Sigmoid colon (tissue), 7 donors: ENCODE measurements at regions of chr1 and their contacts with region 1.

Region 1: DNA sequence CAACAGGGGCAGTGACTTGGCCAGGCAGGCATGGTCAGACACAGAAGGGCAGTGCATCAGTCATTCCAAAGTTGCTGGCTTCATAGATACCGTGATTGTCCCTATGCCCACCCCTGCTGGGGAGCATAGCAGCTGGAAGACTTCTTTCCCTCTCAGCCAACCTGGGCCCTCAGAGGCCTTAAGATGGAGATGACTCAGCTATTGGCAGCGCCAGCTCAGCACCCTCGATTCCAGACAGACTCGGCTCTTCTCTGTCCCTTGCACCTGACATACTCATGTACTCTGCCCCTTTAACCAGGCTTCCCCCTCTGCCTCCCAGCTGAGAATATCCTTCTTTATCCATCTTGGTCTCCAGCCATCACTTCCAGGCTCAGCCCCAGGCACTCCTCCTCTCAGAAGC is 16.8 kb downstream of the SLAMF8 start:
- DNase-seq: no peak
- H3K4me3 ChIP-seq: no peak overlapping the region
- H3K27ac ChIP-seq: no peak overlapping the region
- H3K4me1 ChIP-seq: no peaks in the 10 kb centered on the region
- H3K27me3 ChIP-seq: no peaks in the 10 kb centered on the region
- CTCF ChIP-seq: no peak
- EP300 ChIP-seq: no peak
- POLR2A ChIP-seq: no peak

Region 2: GRCh38 chr1:159804924-159805323 is 38.5 kb before region 1 on chr1:
- intact Hi-C with region 1: loop called (anchors 5 kb)
- DNase-seq: no peak
- H3K4me3 ChIP-seq: no peak overlapping the region
- H3K27ac ChIP-seq: no peak overlapping the region
- H3K4me1 ChIP-seq: no peaks in the 10 kb centered on the region
- H3K27me3 ChIP-seq: no peaks in the 10 kb centered on the region
- CTCF ChIP-seq: no peak
- EP300 ChIP-seq: no peak
- POLR2A ChIP-seq: no peak

Region 3: GRCh38 chr1:159891275-159892157 is 48.1 kb after region 1 on chr1:
- intact Hi-C with region 1: no loop called
- DNase-seq: peak; percentile 88
- H3K4me3 ChIP-seq: no peak overlapping the region
- H3K27ac ChIP-seq: no peak overlapping the region
- H3K4me1 ChIP-seq: peaks cover 0 to 5% (median 0%) of the 10 kb centered on the region in 4 donors
- H3K27me3 ChIP-seq: no peaks in the 10 kb centered on the region
- CTCF ChIP-seq: peak; percentile 90 to 98 (median 94)
- EP300 ChIP-seq: no peak
- POLR2A ChIP-seq: no peak

Region 4: DNA sequence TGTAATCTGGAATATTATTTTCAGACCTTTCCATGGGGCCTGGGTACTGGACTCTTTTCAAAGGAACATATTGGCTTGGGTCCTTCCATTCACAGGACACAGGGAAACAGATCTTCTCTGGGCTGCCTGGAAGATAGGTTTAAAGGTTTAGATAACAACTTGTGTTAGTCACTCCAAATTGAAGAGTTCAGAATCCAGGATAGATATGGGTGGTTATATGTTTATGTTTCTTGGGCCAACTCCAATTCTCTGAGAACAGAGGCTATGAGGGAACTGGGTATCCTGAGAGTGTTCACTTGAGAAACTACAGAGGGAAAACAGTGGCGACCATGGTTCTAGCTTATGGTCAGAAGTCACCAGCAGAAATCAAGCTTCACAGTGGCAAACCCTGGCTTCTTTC is 197.0 kb after region 1 on chr1:
- intact Hi-C with region 1: no loop called
- DNase-seq: no peak
- H3K4me3 ChIP-seq: no peak overlapping the region
- H3K27ac ChIP-seq: no peak overlapping the region
- H3K4me1 ChIP-seq: no peaks in the 10 kb centered on the region
- H3K27me3 ChIP-seq: no peaks in the 10 kb centered on the region
- CTCF ChIP-seq: no peak
- EP300 ChIP-seq: no peak
- POLR2A ChIP-seq: no peak